Posterior vena cava (tissue), 2 donors: ENCODE measurements at regions of chr22 and their contacts with region 1.

Region 1: DNA sequence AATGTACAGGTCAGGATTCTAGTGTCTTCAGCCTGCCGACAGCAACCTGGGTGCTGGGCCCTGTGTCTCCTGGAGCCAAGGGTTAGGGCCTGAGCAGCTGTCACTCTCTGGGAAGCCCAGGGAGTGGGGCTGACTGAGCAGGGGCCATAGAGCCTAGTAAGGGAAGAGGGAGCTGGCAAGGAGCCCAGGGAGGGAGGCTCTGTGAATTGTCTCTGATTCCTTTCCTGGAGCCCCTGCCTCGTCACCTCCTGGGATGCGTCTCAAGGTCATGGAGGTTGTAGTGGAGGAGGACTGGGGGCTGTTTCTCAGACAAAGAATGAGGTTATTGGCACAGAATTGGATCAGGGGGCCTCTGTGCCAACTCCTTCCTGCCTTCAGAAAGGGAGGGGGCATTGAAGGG is 11.8 kb downstream of the SOX10 start:
- DNase-seq: no peak

Region 2: GRCh38 chr22:36725356-36726006 is 1247.0 kb before region 1 on chr22:
- intact Hi-C with region 1: loop called in 1 of 2 experiments (anchors 5 kb)
- DNase-seq: peak; percentile 22

Region 3: GRCh38 chr22:37999956-38000272 is 27.4 kb after region 1 on chr22:
- intact Hi-C with region 1: no loop called
- DNase-seq: no peak

Region 4: DNA sequence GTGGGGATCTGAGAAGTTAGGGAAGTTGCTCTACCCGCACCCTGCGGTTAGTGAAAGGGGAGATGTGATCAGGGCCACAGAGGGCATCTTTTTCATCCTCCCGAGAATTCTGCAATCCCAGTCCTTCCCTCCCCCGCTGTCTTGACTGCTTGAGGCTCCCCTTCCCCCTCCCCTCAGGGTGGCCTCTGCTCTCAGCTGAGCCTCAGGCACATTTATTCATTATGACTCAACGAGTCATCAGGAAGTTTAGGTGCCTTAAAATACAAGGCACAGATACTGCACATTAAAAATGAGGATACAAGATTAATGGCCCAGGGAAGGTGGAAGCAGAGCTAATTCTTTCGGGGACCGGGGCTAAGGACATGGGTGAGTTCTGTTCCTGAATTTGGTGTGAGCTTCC is 1702.0 kb after region 1 on chr22:
- intact Hi-C with region 1: no loop called
- DNase-seq: no peak